ENCODE measurements at regions of chr7 and their contacts with region 1.

Region 1: DNA sequence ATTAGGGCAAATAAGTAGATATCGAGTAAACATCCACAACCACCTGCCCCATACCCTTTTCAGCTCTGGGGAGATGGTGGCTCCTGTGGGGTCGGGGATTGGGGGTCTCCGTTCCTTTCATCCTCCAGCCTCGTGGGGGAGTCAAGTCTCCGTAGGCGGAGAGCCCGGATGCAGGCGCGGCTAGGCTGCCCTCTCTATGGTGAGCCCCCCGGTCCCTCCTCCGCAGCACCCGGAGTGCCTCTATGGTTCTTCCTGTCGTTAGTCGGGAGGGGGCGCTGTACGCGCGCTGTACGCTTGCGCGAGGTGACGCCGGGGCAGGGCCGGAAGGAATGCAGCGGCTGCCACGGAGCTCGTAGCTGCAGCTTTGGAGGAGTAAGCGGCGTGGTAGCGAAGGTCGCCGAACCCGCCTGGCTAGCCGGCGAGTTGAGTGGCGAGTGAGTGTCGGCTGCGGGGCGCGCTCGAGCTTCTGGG is 14.8 kb upstream of the MMD2 start:
- DNase-seq: peak; percentile 91 to 97 (median 94)
- ATAC-seq: peak; percentile 97
- H3K4me3 ChIP-seq: peak overlapping the region; percentile 62 to 65
- H3K4me3 Mint-ChIP-seq: peak overlapping the region; percentile 95
- H3K27ac ChIP-seq: peak overlapping the region; percentile 66 to 79
- H3K27ac Mint-ChIP-seq: peak overlapping the region; percentile 94
- H3K4me1 ChIP-seq: peaks cover 7% of the 10 kb centered on the region
- H3K4me1 Mint-ChIP-seq: peaks cover 35% of the 10 kb centered on the region
- H3K27me3 ChIP-seq: no peaks in the 10 kb centered on the region
- H3K27me3 Mint-ChIP-seq: no peaks in the 10 kb centered on the region
- CTCF ChIP-seq: peak; percentile 73

Region 2: DNA sequence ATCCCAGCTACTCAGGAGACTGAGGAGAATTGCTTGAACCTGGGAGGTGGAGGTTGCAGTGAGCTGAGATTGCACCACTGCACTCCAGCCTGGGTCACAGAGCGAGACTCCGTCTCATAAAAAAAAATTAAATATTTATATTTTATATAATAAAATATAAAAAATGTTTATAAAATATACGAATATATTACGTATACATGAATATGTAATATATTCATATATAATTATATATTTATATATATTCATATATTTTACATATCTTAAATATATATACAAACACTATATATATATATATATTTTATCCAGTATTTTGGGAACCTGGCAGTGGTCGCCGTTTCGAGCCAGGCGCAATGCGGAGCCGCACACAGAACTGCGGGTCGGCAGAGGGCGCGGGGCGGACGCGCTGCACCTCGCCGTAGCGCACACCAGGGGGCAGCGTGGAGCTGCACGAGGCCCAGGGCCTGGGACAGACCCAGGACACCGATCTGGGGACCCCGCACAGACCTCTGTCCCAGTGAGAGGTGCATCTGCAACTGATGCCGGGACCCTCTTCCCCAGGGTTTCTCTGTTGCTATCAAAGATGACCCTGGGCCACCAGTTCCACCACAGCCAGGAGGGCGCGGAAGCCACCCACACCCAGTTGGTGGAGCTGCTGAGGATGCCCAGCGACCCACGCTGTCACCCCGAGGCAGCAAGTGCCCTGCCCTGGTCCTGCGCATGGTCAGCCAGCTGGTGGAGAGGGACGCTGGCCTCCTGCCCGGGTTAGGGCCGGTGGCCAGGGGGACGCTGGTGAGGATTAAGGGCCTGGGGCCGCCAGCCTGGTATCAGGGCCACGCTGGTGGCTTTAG is 175.7 kb before region 1 on chr7:
- CTCF ChIA-PET with region 1: no interaction called
- POLR2A ChIA-PET with region 1: interaction called, 3 read pairs
- intact Hi-C with region 1: loop called in 1 of 2 experiments (anchors 10 kb)
- DNase-seq: peak; percentile 27 to 76 (median 59)
- ATAC-seq: peak; percentile 93
- H3K4me3 ChIP-seq: no peak overlapping the region
- H3K4me3 Mint-ChIP-seq: no peak overlapping the region
- H3K27ac ChIP-seq: no peak overlapping the region
- H3K27ac Mint-ChIP-seq: no peak overlapping the region
- H3K4me1 ChIP-seq: peaks cover under 1% of the 10 kb centered on the region
- H3K4me1 Mint-ChIP-seq: peaks cover 3% of the 10 kb centered on the region
- H3K27me3 ChIP-seq: no peaks in the 10 kb centered on the region
- H3K27me3 Mint-ChIP-seq: no peaks in the 10 kb centered on the region
- CTCF ChIP-seq: peak; percentile 99

Region 3: DNA sequence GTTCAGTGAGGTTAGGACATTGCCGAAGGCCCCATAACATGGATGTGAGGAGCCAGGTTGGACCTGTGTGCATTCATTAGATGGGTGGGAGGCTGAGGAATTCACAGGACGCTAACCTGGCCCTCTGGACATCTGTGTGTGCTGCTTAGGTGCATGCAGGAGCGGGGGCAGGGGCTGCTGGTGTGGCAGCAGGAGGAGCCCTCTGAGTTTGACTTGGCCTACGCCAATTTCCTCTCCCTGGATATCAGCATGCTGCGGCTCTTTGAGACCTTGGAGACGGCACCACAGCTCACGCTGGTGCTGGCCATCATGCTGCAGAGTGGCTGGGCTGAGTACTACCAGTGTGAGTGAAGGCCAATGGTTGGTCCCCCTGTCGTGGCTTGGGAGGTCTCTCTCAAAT is 19.7 kb after region 1 on chr7:
- CTCF ChIA-PET with region 1: no interaction called
- POLR2A ChIA-PET with region 1: no interaction called
- intact Hi-C with region 1: no loop called
- DNase-seq: no peak
- ATAC-seq: no peak
- H3K4me3 ChIP-seq: no peak overlapping the region
- H3K4me3 Mint-ChIP-seq: no peak overlapping the region
- H3K27ac ChIP-seq: no peak overlapping the region
- H3K27ac Mint-ChIP-seq: no peak overlapping the region
- H3K4me1 ChIP-seq: no peaks in the 10 kb centered on the region
- H3K4me1 Mint-ChIP-seq: peaks cover 2% of the 10 kb centered on the region
- H3K27me3 ChIP-seq: no peaks in the 10 kb centered on the region
- H3K27me3 Mint-ChIP-seq: no peaks in the 10 kb centered on the region
- CTCF ChIP-seq: no peak

Region 4: DNA sequence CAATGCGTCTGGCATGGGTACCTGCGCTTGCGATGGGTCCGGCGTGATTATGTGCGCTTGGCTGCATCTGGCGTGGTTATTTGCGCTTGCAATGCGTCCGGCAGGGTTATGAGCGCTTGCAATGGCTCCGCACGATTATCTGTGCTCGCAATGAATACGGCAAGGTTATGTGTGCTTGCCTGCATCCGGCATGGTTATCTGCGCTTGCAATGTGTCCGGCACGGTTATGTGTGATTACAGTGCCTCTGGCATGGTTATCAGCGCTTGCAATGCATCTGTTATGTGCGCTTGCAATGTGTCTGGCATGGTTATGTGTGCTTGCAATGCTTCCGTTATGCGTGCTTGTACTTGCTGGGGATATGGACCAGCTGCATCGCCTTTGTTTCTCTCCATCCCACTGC is 109.5 kb after region 1 on chr7:
- CTCF ChIA-PET with region 1: interaction called, 16 read pairs
- POLR2A ChIA-PET with region 1: interaction called, 4 read pairs
- intact Hi-C with region 1: loop called (anchors 1 kb)
- DNase-seq: no peak
- ATAC-seq: no peak
- H3K4me3 ChIP-seq: no peak overlapping the region
- H3K4me3 Mint-ChIP-seq: no peak overlapping the region
- H3K27ac ChIP-seq: no peak overlapping the region
- H3K27ac Mint-ChIP-seq: no peak overlapping the region
- H3K4me1 ChIP-seq: peaks cover 3% of the 10 kb centered on the region
- H3K4me1 Mint-ChIP-seq: peaks cover 3% of the 10 kb centered on the region
- H3K27me3 ChIP-seq: peaks cover 0 to 2% of the 10 kb centered on the region in 2 experiments
- H3K27me3 Mint-ChIP-seq: no peaks in the 10 kb centered on the region
- CTCF ChIP-seq: no peak

Region 5: DNA sequence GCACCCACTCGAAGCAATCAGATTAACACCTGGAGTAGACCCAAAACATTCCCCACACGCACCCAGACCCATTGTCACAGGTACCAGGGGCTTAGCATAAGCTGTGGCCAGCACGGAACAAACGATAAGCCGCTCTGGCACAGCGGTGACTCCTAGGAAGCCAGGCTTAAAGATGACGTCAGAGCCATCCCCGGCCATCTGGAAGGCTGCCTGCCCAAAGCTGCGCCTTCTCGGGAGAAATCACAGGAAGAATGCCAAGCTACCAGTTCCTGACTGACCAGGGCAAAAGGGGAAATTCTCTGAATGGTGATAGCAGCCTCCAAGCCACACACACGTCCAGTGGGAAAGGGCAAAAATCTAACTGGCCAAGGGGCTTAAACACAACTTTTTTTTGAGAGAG is 203.3 kb after region 1 on chr7:
- CTCF ChIA-PET with region 1: interaction called, 37 read pairs
- POLR2A ChIA-PET with region 1: interaction called, 5 read pairs
- intact Hi-C with region 1: loop called in 1 of 2 experiments (anchors 1 kb)
- DNase-seq: no peak
- ATAC-seq: no peak
- H3K4me3 ChIP-seq: no peak overlapping the region
- H3K4me3 Mint-ChIP-seq: no peak overlapping the region
- H3K27ac ChIP-seq: no peak overlapping the region
- H3K27ac Mint-ChIP-seq: no peak overlapping the region
- H3K4me1 ChIP-seq: no peaks in the 10 kb centered on the region
- H3K4me1 Mint-ChIP-seq: peaks cover 2% of the 10 kb centered on the region
- H3K27me3 ChIP-seq: no peaks in the 10 kb centered on the region
- H3K27me3 Mint-ChIP-seq: no peaks in the 10 kb centered on the region
- CTCF ChIP-seq: no peak

Region 6: GRCh38 chr7:5396999-5397663 is 423.4 kb after region 1 on chr7:
- CTCF ChIA-PET with region 1: no interaction called
- POLR2A ChIA-PET with region 1: no interaction called
- intact Hi-C with region 1: loop called in 1 of 2 experiments (anchors 2 kb)
- DNase-seq: peak; percentile 81 to 99 (median 92)
- ATAC-seq: peak; percentile 91
- H3K4me3 ChIP-seq: peak overlapping the region; percentile 83 to 96
- H3K4me3 Mint-ChIP-seq: peak overlapping the region; percentile 82
- H3K27ac ChIP-seq: peak overlapping the region; percentile 84 to 95
- H3K27ac Mint-ChIP-seq: peak overlapping the region; percentile 81
- H3K4me1 ChIP-seq: peaks cover 31% of the 10 kb centered on the region
- H3K4me1 Mint-ChIP-seq: peaks cover 26% of the 10 kb centered on the region
- H3K27me3 ChIP-seq: no peaks in the 10 kb centered on the region
- H3K27me3 Mint-ChIP-seq: no peaks in the 10 kb centered on the region
- CTCF ChIP-seq: no peak